ENCODE measurements at regions of chr11 and their contacts with region 1.

Region 1: DNA sequence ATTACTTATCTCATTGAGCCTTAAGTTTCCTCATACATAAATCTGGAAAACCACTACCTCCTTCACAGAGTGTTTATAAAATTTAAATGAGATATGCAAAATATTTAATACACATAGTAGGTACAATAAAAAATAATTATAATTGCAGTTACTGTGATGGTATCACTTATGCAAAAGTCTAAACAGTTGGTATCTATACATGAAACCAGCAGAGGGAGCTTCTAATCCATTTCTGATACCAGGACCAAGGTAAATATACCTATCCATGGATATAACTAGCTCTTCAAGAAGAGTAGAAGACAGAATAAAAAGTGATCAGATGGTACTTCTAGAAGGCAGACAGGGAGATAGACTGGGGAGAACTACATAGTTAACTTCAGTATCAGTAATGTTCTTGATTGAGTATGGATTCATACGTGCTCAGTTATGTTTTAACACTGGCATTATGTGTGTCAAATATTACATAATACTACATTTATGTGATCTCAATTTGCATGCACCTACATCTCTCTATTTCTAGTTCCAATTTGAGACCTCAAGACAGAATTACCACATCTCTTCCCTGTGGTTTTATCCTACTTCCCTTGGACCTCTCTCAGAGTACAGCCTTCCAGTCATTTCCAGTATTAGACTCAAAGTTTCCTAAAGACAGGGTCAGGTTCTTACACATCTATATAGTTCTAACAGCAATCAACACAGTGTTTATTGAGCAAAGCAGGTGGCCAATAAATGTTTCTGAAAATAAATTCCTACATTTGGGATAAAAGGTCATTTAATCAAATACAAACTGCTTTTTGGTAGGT is 13.7 kb upstream of the TSG101 start:
- DNase-seq: no peak
- ATAC-seq: peak; percentile 89
- H3K4me3 ChIP-seq: no peak overlapping the region
- H3K27ac ChIP-seq: no peak overlapping the region
- H3K4me1 ChIP-seq: no peaks in the 10 kb centered on the region
- H3K27me3 ChIP-seq: no peaks in the 10 kb centered on the region
- CTCF ChIP-seq: peak; percentile 49 to 82 (median 71); a peak in 5 of 6 replicates
- POLR2A ChIP-seq: no peak
- RAD21 ChIP-seq: peak; percentile 81

Region 2: GRCh38 chr11:18145025-18145424 is 395.4 kb before region 1 on chr11:
- CTCF ChIA-PET with region 1: no interaction called
- POLR2A ChIA-PET with region 1: no interaction called
- RAD21 ChIA-PET with region 1: no interaction called
- intact Hi-C with region 1: no loop called
- DNase-seq: no peak
- ATAC-seq: peak; percentile 64; the same call in 1 of the 2 replicates
- H3K4me3 ChIP-seq: no peak overlapping the region
- H3K27ac ChIP-seq: no peak overlapping the region
- H3K4me1 ChIP-seq: peaks cover 0 to 11% of the 10 kb centered on the region in 2 experiments; a peak in 2 of 4 replicates
- H3K27me3 ChIP-seq: no peaks in the 10 kb centered on the region
- CTCF ChIP-seq: peak in 2 of 3 experiments; percentile 26 to 58; a peak in 3 of 6 replicates
- POLR2A ChIP-seq: no peak
- RAD21 ChIP-seq: peak; percentile 40

Region 3: DNA sequence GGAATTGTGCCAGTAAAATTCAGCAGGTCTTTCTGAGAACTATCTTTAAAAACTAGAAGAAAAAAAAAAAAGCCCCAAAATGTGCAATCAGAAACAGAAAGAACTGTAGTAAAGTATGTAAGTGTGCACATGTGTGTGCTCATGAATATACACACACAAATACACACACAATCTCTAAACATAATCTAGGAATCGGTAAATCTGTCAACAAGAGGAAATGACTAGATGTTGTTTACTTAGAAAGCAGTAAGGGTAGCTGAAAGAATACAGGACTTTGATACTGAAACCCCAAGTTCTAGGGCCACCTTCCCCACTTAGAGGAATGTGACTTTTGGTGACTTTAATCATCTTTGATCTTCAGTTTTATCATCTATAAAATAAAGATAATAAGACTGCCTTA is 35.0 kb after region 1 on chr11:
- CTCF ChIA-PET with region 1: no interaction called
- POLR2A ChIA-PET with region 1: no interaction called
- RAD21 ChIA-PET with region 1: no interaction called
- intact Hi-C with region 1: no loop called
- DNase-seq: no peak
- ATAC-seq: no peak
- H3K4me3 ChIP-seq: no peak overlapping the region
- H3K27ac ChIP-seq: no peak overlapping the region
- H3K4me1 ChIP-seq: peaks cover 14 to 17% of the 10 kb centered on the region in 2 experiments; a peak in 3 of 4 replicates
- H3K27me3 ChIP-seq: no peaks in the 10 kb centered on the region
- CTCF ChIP-seq: no peak
- POLR2A ChIP-seq: no peak
- RAD21 ChIP-seq: no peak

Region 4: DNA sequence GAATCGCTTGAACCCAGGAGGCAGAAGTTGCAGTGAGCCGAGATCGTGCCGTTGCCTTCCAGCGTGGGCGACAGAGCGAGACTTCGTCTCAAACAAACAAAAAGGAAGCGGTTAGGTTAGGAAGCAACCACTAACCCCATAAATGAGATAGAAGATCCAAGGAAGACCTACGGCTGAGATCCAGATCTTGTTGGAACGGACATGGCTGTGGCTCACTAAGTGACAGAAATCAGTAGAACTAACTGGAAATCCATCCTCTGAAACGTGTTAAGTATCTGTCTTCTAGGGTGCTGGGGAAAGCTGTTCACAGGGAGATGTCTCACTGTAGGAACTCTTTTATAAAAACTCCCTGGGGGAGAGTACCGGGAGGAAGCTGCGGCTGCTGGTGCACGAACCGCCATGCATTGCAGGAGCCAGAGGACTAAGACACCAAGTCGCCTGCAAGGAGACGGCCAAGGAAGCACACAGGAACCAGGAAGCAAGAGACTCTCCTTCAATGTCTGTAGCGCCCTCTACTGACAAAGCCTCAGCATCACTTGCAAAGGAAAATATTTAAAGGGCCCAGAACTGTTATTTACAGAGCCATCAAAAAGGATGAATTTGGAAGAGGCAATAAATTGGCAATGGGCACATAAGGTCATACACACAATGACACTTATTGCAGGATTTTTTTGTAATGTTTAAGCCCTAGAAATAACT is 110.6 kb after region 1 on chr11:
- CTCF ChIA-PET with region 1: interaction called, 8 read pairs
- POLR2A ChIA-PET with region 1: no interaction called
- RAD21 ChIA-PET with region 1: interaction called in 1 of 2 experiments, 7 read pairs
- intact Hi-C with region 1: loop called (anchors 1 kb)
- DNase-seq: peak; percentile 69
- ATAC-seq: peak; percentile 97
- H3K4me3 ChIP-seq: no peak overlapping the region
- H3K27ac ChIP-seq: no peak overlapping the region
- H3K4me1 ChIP-seq: no peaks in the 10 kb centered on the region; a peak in 1 of 4 replicates
- H3K27me3 ChIP-seq: no peaks in the 10 kb centered on the region
- CTCF ChIP-seq: peak; percentile 69 to 86 (median 79)
- POLR2A ChIP-seq: no peak
- RAD21 ChIP-seq: peak; percentile 80

Region 5: DNA sequence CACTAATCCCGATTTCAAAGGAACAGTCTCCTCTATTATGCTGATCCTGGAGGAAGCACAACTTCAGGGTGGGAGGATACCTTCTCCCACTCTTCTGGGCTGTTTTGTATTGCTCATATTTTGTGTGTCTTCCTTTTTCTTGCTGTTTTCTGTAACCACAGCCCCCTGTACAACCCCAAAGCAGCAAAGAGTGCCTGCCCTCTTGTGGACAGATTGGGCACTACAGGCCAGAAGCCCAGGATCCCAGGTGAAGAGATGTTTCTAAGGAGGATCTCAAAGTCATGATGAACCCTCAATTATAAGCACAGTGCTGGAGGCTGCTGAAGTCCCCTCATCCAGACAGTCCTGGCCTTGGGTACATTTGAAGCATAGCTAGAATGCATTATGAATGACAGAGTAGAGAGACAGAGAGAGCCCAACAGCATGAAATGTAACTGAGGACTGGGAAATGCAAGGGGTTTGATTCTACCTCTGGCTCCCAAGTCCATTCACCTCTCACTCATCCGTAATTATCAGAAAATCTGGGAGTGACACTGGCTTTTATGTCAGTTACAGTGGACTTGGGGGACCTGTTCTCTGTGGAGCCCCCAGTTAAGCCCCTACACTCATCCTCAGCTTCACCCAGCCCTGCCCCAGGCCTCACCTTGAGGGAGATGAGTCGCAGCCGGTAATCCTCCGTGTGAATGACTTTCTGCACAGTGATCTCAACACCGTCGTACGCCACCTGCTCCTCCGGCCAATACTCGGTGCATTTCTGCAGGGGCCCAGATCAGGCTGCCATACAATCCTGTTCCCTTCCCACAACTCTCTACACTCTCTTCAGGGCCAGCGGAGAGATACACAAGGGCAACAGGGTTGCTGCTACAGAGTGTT is 191.8 kb after region 1 on chr11:
- CTCF ChIA-PET with region 1: interaction called, 24 read pairs
- POLR2A ChIA-PET with region 1: no interaction called
- RAD21 ChIA-PET with region 1: no interaction called
- intact Hi-C with region 1: loop called (anchors 2 kb)
- DNase-seq: peak; percentile 19
- ATAC-seq: peak; percentile 74
- H3K4me3 ChIP-seq: no peak overlapping the region
- H3K27ac ChIP-seq: no peak overlapping the region
- H3K4me1 ChIP-seq: peaks cover 0 to 7% of the 10 kb centered on the region in 2 experiments; a peak in 2 of 4 replicates
- H3K27me3 ChIP-seq: no peaks in the 10 kb centered on the region
- CTCF ChIP-seq: peak; percentile 80 to 99 (median 99)
- POLR2A ChIP-seq: no peak
- RAD21 ChIP-seq: peak; percentile 81

Region 6: DNA sequence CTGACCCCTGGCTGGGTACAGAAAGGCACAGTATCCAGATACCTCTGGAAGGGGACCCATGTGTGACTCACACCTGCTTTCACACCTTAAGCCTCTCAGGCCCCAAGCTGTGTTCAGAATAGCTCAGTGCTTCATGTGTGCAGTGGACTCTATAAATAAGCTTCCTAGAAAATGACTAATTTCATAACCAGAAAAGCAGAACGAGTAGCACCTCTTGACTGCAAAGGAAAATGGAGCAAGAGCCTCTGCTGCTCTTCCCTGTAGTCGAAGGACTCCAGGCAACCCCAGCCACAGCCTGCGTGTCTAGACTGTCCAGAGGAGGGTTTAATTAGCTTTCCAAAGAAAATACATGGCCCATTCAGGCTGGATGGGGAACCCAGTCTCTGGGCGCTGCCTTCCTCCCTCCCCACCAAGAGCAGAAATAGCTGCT is 228.1 kb after region 1 on chr11:
- CTCF ChIA-PET with region 1: interaction called, 42 read pairs
- POLR2A ChIA-PET with region 1: no interaction called
- RAD21 ChIA-PET with region 1: interaction called, 5 read pairs
- intact Hi-C with region 1: loop called (anchors 1 kb)
- DNase-seq: no peak
- ATAC-seq: no peak
- H3K4me3 ChIP-seq: no peak overlapping the region
- H3K27ac ChIP-seq: no peak overlapping the region
- H3K4me1 ChIP-seq: peaks cover 4 to 11% of the 10 kb centered on the region in 2 experiments
- H3K27me3 ChIP-seq: no peaks in the 10 kb centered on the region
- CTCF ChIP-seq: no peak
- POLR2A ChIP-seq: no peak
- RAD21 ChIP-seq: no peak